CD8-positive, alpha-beta T cell (primary cell): ENCODE measurements at regions of chr2 and their contacts with region 1.

Region 1: GRCh38 chr2:191078165-191078867 is 64.3 kb upstream of the STAT1 start:
- DNase-seq: no peak
- ATAC-seq: no peak
- H3K4me3 ChIP-seq: no peak overlapping the region
- H3K4me3 Mint-ChIP-seq: peak overlapping the region; percentile 1
- H3K27ac ChIP-seq: peak overlapping the region in 1 of 2 experiments; percentile 41
- H3K27ac Mint-ChIP-seq: peak overlapping the region; percentile 72
- H3K4me1 ChIP-seq: no peaks in the 10 kb centered on the region
- H3K4me1 Mint-ChIP-seq: peaks cover 43% of the 10 kb centered on the region
- H3K27me3 ChIP-seq: no peaks in the 10 kb centered on the region
- H3K27me3 Mint-ChIP-seq: no peaks in the 10 kb centered on the region
- CTCF ChIP-seq: no peak

Region 2: DNA sequence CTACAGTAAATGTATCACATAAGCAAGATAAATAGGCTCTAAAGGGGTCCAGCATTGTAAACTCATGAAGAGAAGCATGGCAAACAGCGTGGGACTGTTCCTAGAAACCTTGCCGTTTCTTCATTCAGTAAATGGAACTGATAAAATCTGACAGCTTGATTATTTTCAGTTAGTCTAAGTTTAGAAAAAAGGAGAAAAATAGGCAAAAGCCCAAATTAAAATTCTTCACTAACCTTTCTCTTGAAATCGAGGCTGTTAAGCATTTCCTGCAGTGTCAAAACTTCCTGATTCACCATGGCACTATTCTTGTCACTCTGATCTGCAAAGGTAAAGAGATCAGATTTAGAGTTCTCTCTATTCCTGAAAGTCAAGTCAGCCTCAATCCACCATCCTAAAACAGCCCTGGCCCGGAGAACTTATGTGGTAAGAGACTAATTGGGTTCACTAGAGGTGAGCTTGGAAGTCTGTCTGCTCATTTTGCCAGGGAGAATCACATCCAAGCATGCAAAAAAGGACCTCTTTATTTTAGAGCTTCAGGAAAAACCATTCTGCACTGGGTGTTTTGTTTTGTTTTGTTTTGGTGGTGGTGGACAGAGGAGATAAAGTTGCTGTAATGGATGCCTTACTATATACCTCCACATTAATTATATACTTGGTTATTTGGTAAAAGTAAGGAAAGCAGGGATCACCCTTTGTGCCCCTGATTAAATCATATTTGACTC is 12.0 kb before region 1 on chr2:
- CTCF ChIA-PET with region 1: interaction called, 3 read pairs
- POLR2A ChIA-PET with region 1: no interaction called
- intact Hi-C with region 1: loop called in 1 of 2 experiments (anchors 2 kb)
- DNase-seq: peak in 1 of 9 experiments; percentile 46
- ATAC-seq: no peak
- H3K4me3 ChIP-seq: peak overlapping the region in 1 of 2 experiments; percentile 48
- H3K4me3 Mint-ChIP-seq: peak overlapping the region; percentile 75
- H3K27ac ChIP-seq: peak overlapping the region; percentile 4 to 62
- H3K27ac Mint-ChIP-seq: peak overlapping the region; percentile 86
- H3K4me1 ChIP-seq: peaks cover 76% of the 10 kb centered on the region
- H3K4me1 Mint-ChIP-seq: peaks cover 84% of the 10 kb centered on the region
- H3K27me3 ChIP-seq: no peaks in the 10 kb centered on the region
- H3K27me3 Mint-ChIP-seq: no peaks in the 10 kb centered on the region
- CTCF ChIP-seq: no peak

Region 3: GRCh38 chr2:191105082-191105481 is 26.8 kb after region 1 on chr2:
- CTCF ChIA-PET with region 1: no interaction called
- POLR2A ChIA-PET with region 1: no interaction called
- intact Hi-C with region 1: no loop called
- DNase-seq: no peak
- ATAC-seq: no peak
- H3K4me3 ChIP-seq: no peak overlapping the region
- H3K4me3 Mint-ChIP-seq: no peak overlapping the region
- H3K27ac ChIP-seq: no peak overlapping the region
- H3K27ac Mint-ChIP-seq: no peak overlapping the region
- H3K4me1 ChIP-seq: peaks cover 9% of the 10 kb centered on the region
- H3K4me1 Mint-ChIP-seq: peaks cover 59% of the 10 kb centered on the region
- H3K27me3 ChIP-seq: no peaks in the 10 kb centered on the region
- H3K27me3 Mint-ChIP-seq: no peaks in the 10 kb centered on the region
- CTCF ChIP-seq: no peak

Region 4: GRCh38 chr2:191128172-191128910 is 50.0 kb after region 1 on chr2:
- CTCF ChIA-PET with region 1: no interaction called
- POLR2A ChIA-PET with region 1: no interaction called
- intact Hi-C with region 1: loop called in 1 of 2 experiments (anchors 5 kb)
- DNase-seq: peak in 2 of 9 experiments; percentile 68 to 79
- ATAC-seq: peak; percentile 78
- H3K4me3 ChIP-seq: peak overlapping the region; percentile 0 to 31
- H3K4me3 Mint-ChIP-seq: peak overlapping the region; percentile 60
- H3K27ac ChIP-seq: peak overlapping the region; percentile 39 to 91
- H3K27ac Mint-ChIP-seq: peak overlapping the region; percentile 62
- H3K4me1 ChIP-seq: peaks cover 38% of the 10 kb centered on the region
- H3K4me1 Mint-ChIP-seq: peaks cover 70% of the 10 kb centered on the region
- H3K27me3 ChIP-seq: no peaks in the 10 kb centered on the region
- H3K27me3 Mint-ChIP-seq: no peaks in the 10 kb centered on the region
- CTCF ChIP-seq: no peak

Region 5: DNA sequence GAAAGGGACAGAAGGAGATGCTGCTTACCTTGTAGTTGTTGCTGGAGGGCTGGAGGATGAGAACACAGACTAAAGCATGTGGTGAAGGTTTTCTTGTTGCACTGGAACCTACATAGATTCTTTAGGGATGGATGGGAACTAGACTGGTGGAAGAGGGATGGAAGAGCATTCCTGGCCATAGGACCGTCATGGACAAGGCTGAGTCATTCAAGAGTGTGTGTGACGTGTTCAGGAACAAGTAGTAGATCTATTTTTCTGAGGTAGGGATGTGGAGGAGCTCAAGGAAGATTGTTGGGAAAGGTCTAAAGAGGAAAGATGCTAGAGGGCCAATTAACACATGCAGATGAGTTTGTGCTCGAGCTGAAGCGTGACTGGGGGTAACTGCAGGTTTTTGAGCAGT is 65.9 kb after region 1 on chr2:
- CTCF ChIA-PET with region 1: no interaction called
- POLR2A ChIA-PET with region 1: interaction called, 3 read pairs
- intact Hi-C with region 1: loop called in 1 of 2 experiments (anchors 2 kb)
- DNase-seq: no peak
- ATAC-seq: no peak
- H3K4me3 ChIP-seq: no peak overlapping the region
- H3K4me3 Mint-ChIP-seq: peak overlapping the region; percentile 40
- H3K27ac ChIP-seq: no peak overlapping the region
- H3K27ac Mint-ChIP-seq: peak overlapping the region; percentile 28
- H3K4me1 ChIP-seq: peaks cover 65% of the 10 kb centered on the region
- H3K4me1 Mint-ChIP-seq: peaks cover 82% of the 10 kb centered on the region
- H3K27me3 ChIP-seq: no peaks in the 10 kb centered on the region
- H3K27me3 Mint-ChIP-seq: no peaks in the 10 kb centered on the region
- CTCF ChIP-seq: no peak